Activated CD8-positive, alpha-beta T cell treated with anti-CD3 and anti-CD28 coated beads for 36 hours (primary cell): ENCODE measurements at regions of chr21 and their contacts with region 1.

Region 1: DNA sequence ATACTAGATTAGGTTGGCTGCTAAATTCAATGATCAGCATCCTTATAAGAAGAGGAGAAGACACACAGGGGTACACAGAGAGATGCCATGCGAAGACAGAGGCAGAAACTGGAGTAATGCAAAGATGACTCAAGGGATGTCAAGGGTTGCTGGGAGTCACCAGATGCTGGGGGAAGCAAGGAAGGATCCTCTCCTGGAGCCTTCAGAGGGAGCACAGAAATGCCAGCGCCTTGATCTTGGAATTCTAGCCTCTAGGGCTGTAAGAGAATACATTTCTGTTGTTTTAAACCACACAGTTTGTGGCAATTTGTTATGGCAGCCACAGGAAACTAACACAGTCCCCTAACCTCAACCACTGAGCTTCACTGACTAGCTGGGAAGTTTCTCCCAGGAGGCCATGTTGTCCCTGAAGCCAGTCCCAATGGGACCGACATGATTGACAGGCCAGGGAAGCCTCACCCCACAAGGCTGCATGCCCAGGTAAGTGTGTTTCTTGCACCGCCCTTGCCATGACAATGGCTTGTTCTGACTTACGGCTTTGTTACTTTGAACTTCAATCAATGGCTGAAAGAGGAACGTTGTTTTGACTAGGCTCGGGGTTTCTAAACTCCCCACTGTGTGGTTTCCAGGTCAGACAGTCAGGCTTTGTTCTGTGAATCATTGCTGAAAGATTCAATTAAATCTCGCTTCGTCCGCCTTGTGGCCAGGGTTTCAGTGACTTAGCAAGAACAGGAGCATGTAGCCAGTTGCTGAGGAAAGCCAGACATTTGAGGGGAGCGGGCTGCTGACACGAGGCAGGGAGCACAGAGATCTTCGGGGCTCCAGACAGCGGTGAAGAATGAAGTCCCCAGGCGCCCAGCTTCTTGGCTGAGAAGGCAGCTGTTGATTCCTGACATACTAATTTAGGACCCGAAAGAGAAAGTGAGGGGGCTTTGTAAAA is 62.3 kb downstream of the RUNX1 start:
- DNase-seq: peak; percentile 94
- ATAC-seq: peak; percentile 46
- H3K4me3 Mint-ChIP-seq: peak overlapping the region; percentile 72
- H3K27ac Mint-ChIP-seq: peak overlapping the region; percentile 92
- H3K4me1 Mint-ChIP-seq: peaks cover 91% of the 10 kb centered on the region
- H3K27me3 Mint-ChIP-seq: no peaks in the 10 kb centered on the region
- CTCF ChIP-seq: no peak

Region 2: GRCh38 chr21:34782506-34783365 is 204.1 kb before region 1 on chr21:
- CTCF ChIA-PET with region 1: no interaction called
- POLR2A ChIA-PET with region 1: no interaction called
- intact Hi-C with region 1: no loop called
- DNase-seq: no peak
- ATAC-seq: no peak
- H3K4me3 Mint-ChIP-seq: no peak overlapping the region
- H3K27ac Mint-ChIP-seq: no peak overlapping the region
- H3K4me1 Mint-ChIP-seq: peaks cover 8% of the 10 kb centered on the region
- H3K27me3 Mint-ChIP-seq: no peaks in the 10 kb centered on the region
- CTCF ChIP-seq: no peak

Region 3: DNA sequence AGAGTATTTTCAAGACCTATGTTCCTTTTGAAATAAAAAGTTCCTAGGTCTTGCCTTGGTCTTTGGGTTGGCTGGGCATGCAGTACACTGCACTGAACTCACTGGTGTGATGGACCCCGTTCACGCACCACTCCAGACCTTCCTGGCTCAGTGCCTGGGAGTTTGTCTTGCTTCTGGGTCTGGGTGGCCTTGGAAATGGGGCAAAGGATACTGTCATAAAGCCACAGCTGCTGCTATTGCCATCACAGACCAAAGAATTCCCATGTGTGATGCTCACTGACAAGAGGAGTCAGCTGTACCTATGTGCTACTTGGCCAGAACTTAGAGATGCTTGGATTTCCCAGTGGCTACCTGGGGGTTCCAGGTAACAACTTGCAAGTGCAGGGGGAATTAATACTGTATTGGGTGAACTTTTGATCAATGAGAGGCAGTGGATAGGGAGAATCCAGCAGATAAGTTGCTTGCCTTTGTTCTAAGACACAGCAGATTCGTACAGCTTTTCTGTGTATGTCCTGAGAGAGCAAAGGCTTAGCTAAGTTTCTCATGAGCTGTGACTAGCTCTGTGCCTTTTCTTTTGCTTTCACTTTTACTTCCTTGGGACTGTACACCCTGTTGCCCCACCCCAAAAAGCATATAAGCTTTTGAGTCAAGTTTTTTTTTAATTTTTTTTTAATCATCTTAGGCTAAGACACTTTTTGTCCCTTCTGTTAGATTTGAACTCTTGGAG is 53.1 kb before region 1 on chr21:
- CTCF ChIA-PET with region 1: interaction called, 9 read pairs
- POLR2A ChIA-PET with region 1: interaction called, 25 read pairs
- intact Hi-C with region 1: loop called (anchors 2 kb)
- DNase-seq: peak; percentile 49
- ATAC-seq: peak; percentile 84
- H3K4me3 Mint-ChIP-seq: peak overlapping the region; percentile 75
- H3K27ac Mint-ChIP-seq: peak overlapping the region; percentile 98
- H3K4me1 Mint-ChIP-seq: peaks cover 82% of the 10 kb centered on the region
- H3K27me3 Mint-ChIP-seq: no peaks in the 10 kb centered on the region
- CTCF ChIP-seq: no peak

Region 4: GRCh38 chr21:34967509-34968289 is 19.1 kb before region 1 on chr21:
- CTCF ChIA-PET with region 1: interaction called, 20 read pairs
- POLR2A ChIA-PET with region 1: interaction called, 54 read pairs
- intact Hi-C with region 1: loop called (anchors 2 kb)
- DNase-seq: peak; percentile 75
- ATAC-seq: peak; percentile 74
- H3K4me3 Mint-ChIP-seq: peak overlapping the region; percentile 29
- H3K27ac Mint-ChIP-seq: peak overlapping the region; percentile 89
- H3K4me1 Mint-ChIP-seq: peaks cover 87% of the 10 kb centered on the region
- H3K27me3 Mint-ChIP-seq: peaks cover 3% of the 10 kb centered on the region
- CTCF ChIP-seq: no peak

Region 5: GRCh38 chr21:35002879-35003722 is 16.3 kb after region 1 on chr21:
- CTCF ChIA-PET with region 1: interaction called, 6 read pairs
- POLR2A ChIA-PET with region 1: interaction called, 13 read pairs
- intact Hi-C with region 1: no loop called
- DNase-seq: no peak
- ATAC-seq: no peak
- H3K4me3 Mint-ChIP-seq: no peak overlapping the region
- H3K27ac Mint-ChIP-seq: peak overlapping the region; percentile 17
- H3K4me1 Mint-ChIP-seq: peaks cover 86% of the 10 kb centered on the region
- H3K27me3 Mint-ChIP-seq: no peaks in the 10 kb centered on the region
- CTCF ChIP-seq: no peak

Region 6: GRCh38 chr21:35026617-35027562 is 40.1 kb after region 1 on chr21:
- CTCF ChIA-PET with region 1: interaction called, 9 read pairs
- POLR2A ChIA-PET with region 1: interaction called, 53 read pairs
- intact Hi-C with region 1: loop called (anchors 5 kb)
- DNase-seq: peak; percentile 91
- ATAC-seq: peak; percentile 79
- H3K4me3 Mint-ChIP-seq: peak overlapping the region; percentile 80
- H3K27ac Mint-ChIP-seq: peak overlapping the region; percentile 97
- H3K4me1 Mint-ChIP-seq: peaks cover 80% of the 10 kb centered on the region
- H3K27me3 Mint-ChIP-seq: no peaks in the 10 kb centered on the region
- CTCF ChIP-seq: no peak

Region 7: GRCh38 chr21:35045542-35046262 is 58.9 kb after region 1 on chr21:
- CTCF ChIA-PET with region 1: interaction called, 56 read pairs
- POLR2A ChIA-PET with region 1: interaction called, 183 read pairs
- intact Hi-C with region 1: loop called (anchors 2 kb)
- DNase-seq: peak; percentile 70
- ATAC-seq: peak; percentile 2
- H3K4me3 Mint-ChIP-seq: peak overlapping the region; percentile 91
- H3K27ac Mint-ChIP-seq: peak overlapping the region; percentile 97
- H3K4me1 Mint-ChIP-seq: peaks cover 90% of the 10 kb centered on the region
- H3K27me3 Mint-ChIP-seq: no peaks in the 10 kb centered on the region
- CTCF ChIP-seq: no peak

Region 8: DNA sequence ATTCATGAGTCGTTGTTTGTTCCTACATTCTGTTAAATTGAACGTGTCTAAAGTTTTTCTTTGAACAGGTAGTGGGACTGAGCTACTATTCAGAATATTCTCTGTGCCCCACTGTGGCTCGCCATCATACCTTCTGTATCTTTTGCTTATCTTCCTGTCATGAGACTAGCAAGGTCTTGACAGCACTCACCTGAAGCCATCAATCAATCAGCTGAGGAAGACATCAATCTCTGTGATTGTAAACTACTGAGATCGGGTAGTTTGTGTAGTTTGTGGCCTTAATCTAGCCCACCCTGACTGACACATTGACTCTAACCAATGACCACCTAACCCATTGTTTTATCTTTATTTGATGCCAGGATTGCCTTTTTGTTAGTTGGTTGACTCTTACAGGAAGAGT is 80.0 kb after region 1 on chr21:
- CTCF ChIA-PET with region 1: no interaction called
- POLR2A ChIA-PET with region 1: no interaction called
- intact Hi-C with region 1: no loop called
- DNase-seq: no peak
- ATAC-seq: no peak
- H3K4me3 Mint-ChIP-seq: no peak overlapping the region
- H3K27ac Mint-ChIP-seq: no peak overlapping the region
- H3K4me1 Mint-ChIP-seq: peaks cover 11% of the 10 kb centered on the region
- H3K27me3 Mint-ChIP-seq: peaks cover 1% of the 10 kb centered on the region
- CTCF ChIP-seq: no peak

Region 9: DNA sequence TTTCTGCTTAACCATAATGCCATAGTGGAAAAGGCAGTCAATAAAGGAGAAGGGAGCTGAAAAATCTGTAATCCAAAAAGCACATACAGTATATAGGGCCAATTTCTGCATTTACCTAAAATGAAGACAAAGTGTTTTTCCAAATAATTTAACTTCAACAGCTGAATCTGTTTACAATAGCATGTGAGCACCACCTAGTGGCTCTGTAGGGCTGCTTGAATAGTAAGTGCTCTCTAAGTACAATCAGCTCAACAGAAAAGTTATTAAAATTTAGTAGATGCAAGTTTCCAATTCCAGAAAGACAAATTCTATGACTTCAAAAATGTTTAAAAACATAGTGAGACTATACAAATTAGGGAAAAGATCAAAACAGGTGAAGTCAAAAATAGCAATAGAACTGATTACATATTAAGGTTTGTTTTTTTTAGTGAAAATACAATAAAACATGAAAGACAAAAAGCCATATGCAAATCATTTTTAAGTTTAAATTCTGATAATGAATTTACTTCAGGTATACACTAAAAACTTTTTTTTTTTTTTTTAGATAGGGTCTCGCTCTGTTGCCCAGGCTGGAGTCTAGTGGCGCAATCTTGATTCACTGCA is 853.5 kb after region 1 on chr21:
- CTCF ChIA-PET with region 1: no interaction called
- POLR2A ChIA-PET with region 1: no interaction called
- intact Hi-C with region 1: no loop called
- DNase-seq: peak; percentile 77
- ATAC-seq: no peak
- H3K4me3 Mint-ChIP-seq: no peak overlapping the region
- H3K27ac Mint-ChIP-seq: no peak overlapping the region
- H3K4me1 Mint-ChIP-seq: no peaks in the 10 kb centered on the region
- H3K27me3 Mint-ChIP-seq: no peaks in the 10 kb centered on the region
- CTCF ChIP-seq: peak; percentile 91

Region 10: DNA sequence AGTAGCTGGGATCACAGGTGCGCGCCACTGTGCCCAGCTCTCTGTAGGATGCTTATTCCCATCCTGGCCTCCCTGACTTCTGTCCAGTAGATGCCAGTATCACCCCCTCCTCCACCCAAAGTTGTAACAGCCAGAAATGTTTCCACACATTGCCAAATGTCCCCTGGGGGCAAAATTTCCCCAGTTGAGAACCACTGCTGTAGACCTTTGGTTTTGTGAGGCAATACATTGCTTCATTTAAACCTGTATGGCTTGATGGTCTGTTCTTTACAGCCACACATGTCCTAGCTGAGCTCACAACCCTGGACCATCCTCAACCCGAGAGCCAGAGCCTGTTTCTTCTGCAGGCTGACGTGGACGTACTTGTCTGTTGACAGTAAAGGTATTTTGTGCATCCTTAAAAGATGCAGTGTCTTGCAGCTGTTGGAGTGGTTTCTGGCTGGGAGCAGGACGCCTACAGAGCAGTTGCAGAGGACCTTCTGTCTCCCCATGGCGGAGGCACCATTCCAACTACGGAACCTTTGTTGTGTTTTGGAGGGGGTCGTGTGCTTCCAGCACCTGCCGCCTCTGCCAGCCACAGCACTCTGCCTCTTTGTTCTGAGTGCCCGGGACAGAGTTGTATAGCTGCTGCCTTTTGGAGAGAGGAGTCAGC is 1196.4 kb after region 1 on chr21:
- CTCF ChIA-PET with region 1: no interaction called
- POLR2A ChIA-PET with region 1: no interaction called
- intact Hi-C with region 1: no loop called
- DNase-seq: no peak
- ATAC-seq: no peak
- H3K4me3 Mint-ChIP-seq: no peak overlapping the region
- H3K27ac Mint-ChIP-seq: no peak overlapping the region
- H3K4me1 Mint-ChIP-seq: peaks cover 9% of the 10 kb centered on the region
- H3K27me3 Mint-ChIP-seq: no peaks in the 10 kb centered on the region
- CTCF ChIP-seq: no peak